T-cell (primary cell): ENCODE measurements at regions of chr4 and their contacts with region 1.

Region 1: GRCh38 chr4:126766241-126766640 is 866.5 kb upstream of the INTU start:
- DNase-seq: no peak
- ATAC-seq: no peak
- H3K4me3 ChIP-seq: no peak overlapping the region
- H3K4me3 Mint-ChIP-seq: no peak overlapping the region
- H3K27ac ChIP-seq: no peak overlapping the region
- H3K27ac Mint-ChIP-seq: no peak overlapping the region
- H3K4me1 ChIP-seq: no peaks in the 10 kb centered on the region
- H3K4me1 Mint-ChIP-seq: no peaks in the 10 kb centered on the region
- H3K27me3 ChIP-seq: no peaks in the 10 kb centered on the region
- H3K27me3 Mint-ChIP-seq: no peaks in the 10 kb centered on the region

Region 2: DNA sequence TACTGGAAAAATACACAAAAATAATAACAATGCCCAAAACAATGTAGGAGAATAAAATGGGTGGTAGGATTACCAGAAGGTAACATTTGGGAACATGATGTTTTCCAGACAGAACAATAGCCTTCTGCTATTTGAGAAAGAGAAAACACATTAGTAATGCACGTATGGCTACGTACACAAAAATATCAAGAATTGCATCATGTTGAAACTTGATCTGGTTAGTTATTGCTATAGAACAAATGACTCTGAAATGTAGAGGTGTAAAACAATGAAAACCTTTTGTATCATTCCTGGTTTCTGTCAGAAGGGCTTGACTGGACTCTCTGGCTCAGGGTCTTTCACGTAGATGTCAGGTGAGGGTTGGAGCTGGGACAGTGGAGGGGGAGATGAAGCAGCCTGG is 411.5 kb before region 1 on chr4:
- CTCF ChIA-PET with region 1: no interaction called
- POLR2A ChIA-PET with region 1: no interaction called
- DNase-seq: no peak
- ATAC-seq: no peak
- H3K4me3 ChIP-seq: no peak overlapping the region
- H3K4me3 Mint-ChIP-seq: no peak overlapping the region
- H3K27ac ChIP-seq: no peak overlapping the region
- H3K27ac Mint-ChIP-seq: no peak overlapping the region
- H3K4me1 ChIP-seq: no peaks in the 10 kb centered on the region
- H3K4me1 Mint-ChIP-seq: no peaks in the 10 kb centered on the region
- H3K27me3 ChIP-seq: no peaks in the 10 kb centered on the region
- H3K27me3 Mint-ChIP-seq: no peaks in the 10 kb centered on the region

Region 3: GRCh38 chr4:126637706-126638105 is 128.5 kb before region 1 on chr4:
- CTCF ChIA-PET with region 1: no interaction called
- POLR2A ChIA-PET with region 1: no interaction called
- DNase-seq: no peak
- ATAC-seq: no peak
- H3K4me3 ChIP-seq: no peak overlapping the region
- H3K4me3 Mint-ChIP-seq: no peak overlapping the region
- H3K27ac ChIP-seq: no peak overlapping the region
- H3K27ac Mint-ChIP-seq: no peak overlapping the region
- H3K4me1 ChIP-seq: no peaks in the 10 kb centered on the region
- H3K4me1 Mint-ChIP-seq: no peaks in the 10 kb centered on the region
- H3K27me3 ChIP-seq: no peaks in the 10 kb centered on the region
- H3K27me3 Mint-ChIP-seq: no peaks in the 10 kb centered on the region

Region 4: GRCh38 chr4:126853715-126854114 is 87.5 kb after region 1 on chr4:
- CTCF ChIA-PET with region 1: no interaction called
- POLR2A ChIA-PET with region 1: interaction called in 1 of 2 experiments, 13 read pairs
- DNase-seq: no peak
- ATAC-seq: no peak
- H3K4me3 ChIP-seq: no peak overlapping the region
- H3K4me3 Mint-ChIP-seq: no peak overlapping the region
- H3K27ac ChIP-seq: no peak overlapping the region
- H3K27ac Mint-ChIP-seq: no peak overlapping the region
- H3K4me1 ChIP-seq: no peaks in the 10 kb centered on the region
- H3K4me1 Mint-ChIP-seq: no peaks in the 10 kb centered on the region
- H3K27me3 ChIP-seq: no peaks in the 10 kb centered on the region
- H3K27me3 Mint-ChIP-seq: no peaks in the 10 kb centered on the region